IMR-90 (cell line): ENCODE measurements at regions of chr3 and their contacts with region 1.

Region 1: DNA sequence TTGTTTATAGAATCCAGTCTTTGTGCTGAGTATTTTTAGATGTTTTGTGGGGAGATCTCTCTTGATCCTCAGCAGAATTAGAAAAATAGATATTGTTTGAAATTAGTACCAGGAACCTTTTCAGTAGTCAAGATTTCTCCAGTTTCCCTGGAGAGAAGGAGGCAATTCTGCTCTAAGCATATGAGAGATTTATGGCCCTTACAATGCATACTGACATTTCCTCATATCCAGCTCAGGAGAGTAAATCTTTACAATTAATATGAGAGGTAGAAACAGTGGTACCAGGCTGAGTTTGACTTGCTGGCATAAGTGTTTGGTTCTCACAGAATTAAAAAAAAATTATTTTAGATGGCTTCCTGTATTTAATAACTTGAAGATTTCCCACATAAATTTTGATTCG is 239.1 kb upstream of the SGO1 start:
- DNase-seq: no peak
- ATAC-seq: no peak
- H3K4me3 ChIP-seq: no peak overlapping the region
- H3K27ac ChIP-seq: no peak overlapping the region
- H3K4me1 ChIP-seq: no peaks in the 10 kb centered on the region
- H3K27me3 ChIP-seq: no peaks in the 10 kb centered on the region
- CTCF ChIP-seq: no peak
- POLR2A ChIP-seq: no peak
- RAD21 ChIP-seq: no peak

Region 2: DNA sequence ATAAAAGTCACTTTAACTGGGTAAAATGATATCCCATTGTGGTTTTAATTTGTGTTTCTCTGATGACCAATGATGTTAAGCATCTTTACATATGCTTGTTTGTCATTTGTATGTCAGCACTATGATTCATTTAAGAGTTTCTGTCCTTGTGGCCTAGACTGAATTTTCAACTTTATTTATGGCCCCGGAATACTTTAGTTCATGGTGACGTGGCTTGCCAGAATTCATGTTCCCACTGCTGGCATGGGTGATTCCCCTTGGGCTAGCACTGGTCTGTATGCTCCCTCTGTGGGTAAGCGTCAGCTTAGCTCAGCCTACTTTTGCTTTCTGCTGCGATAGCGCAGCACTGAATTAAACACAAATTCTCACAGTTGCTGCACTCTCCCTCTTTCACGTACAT is 197.2 kb after region 1 on chr3:
- CTCF ChIA-PET with region 1: interaction called, 12 read pairs
- POLR2A ChIA-PET with region 1: no interaction called
- dilution Hi-C with region 1: no loop called
- in situ Hi-C with region 1: no loop called
- intact Hi-C with region 1: no loop called
- DNase-seq: peak; percentile 72
- ATAC-seq: peak; percentile 54
- H3K4me3 ChIP-seq: no peak overlapping the region
- H3K27ac ChIP-seq: no peak overlapping the region
- H3K4me1 ChIP-seq: no peaks in the 10 kb centered on the region
- H3K27me3 ChIP-seq: no peaks in the 10 kb centered on the region
- CTCF ChIP-seq: peak; percentile 20; the same call in 1 of the 2 replicates
- POLR2A ChIP-seq: no peak
- RAD21 ChIP-seq: peak; percentile 34; the same call in 1 of the 2 replicates